Heart right ventricle (tissue), 16 donors: ENCODE measurements at regions of chr3 and their contacts with region 1.

Region 1: GRCh38 chr3:64773137-64773536 is 85.3 kb upstream of the ADAMTS9 start:
- DNase-seq: no peak
- ATAC-seq: peak in 2 of 8 donors; percentile 58 to 67
- H3K4me3 ChIP-seq: no peak overlapping the region
- H3K27ac ChIP-seq: no peak overlapping the region
- H3K4me1 ChIP-seq: peaks cover 0 to 16% (median 0%) of the 10 kb centered on the region in 9 donors
- H3K27me3 ChIP-seq: no peaks in the 10 kb centered on the region
- CTCF ChIP-seq: no peak

Region 2: GRCh38 chr3:64717872-64718613 is 55.1 kb before region 1 on chr3:
- intact Hi-C with region 1: loop called in 2 of 10 experiments (anchors 2 to 10 kb)
- DNase-seq: no peak
- ATAC-seq: no peak
- H3K4me3 ChIP-seq: no peak overlapping the region
- H3K27ac ChIP-seq: no peak overlapping the region
- H3K4me1 ChIP-seq: peaks cover 0 to 29% (median 14%) of the 10 kb centered on the region in 9 donors
- H3K27me3 ChIP-seq: no peaks in the 10 kb centered on the region
- CTCF ChIP-seq: peak in 8 of 9 donors; percentile 23 to 65 (median 54)